Activated CD4-positive, alpha-beta memory T cell treated with anti-CD3 and anti-CD28 coated beads for 36 hours (primary cell): ENCODE measurements at regions of chr9 and their contacts with region 1.

Region 1: DNA sequence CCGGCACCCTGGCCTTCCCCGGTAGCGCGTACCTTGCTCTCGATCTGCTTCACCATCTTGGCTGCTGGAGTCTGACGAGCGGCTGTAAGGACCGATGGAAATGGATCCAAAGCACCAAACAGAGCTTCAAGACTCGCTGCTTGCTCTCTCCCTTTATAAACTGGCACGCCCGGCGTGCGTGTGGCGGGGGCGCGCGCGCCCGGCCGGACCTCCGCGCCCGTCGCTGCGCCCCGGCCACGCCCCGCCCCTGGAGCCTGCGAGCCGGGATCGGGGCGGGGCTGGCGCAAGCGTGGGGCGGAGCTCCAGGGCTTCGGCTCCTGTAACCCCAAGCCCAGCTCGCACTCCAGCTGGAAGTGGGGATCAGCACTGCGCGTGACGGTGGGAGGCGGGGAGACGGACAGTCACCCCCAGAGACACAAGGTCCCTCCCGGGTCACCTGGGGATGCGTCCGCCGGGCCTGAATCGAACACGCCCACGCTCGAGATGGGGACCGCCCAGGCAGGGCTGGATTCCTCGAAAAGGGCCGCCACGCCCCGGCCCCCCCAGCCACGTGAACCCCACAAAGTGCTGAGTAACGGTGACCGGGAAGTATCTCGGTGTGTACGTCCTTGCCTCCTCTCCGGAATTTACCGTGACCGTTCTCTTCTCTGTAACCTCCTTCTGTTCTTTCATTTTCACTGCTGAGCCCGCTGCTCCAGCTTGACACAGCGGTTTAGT is at the start of gene TXN:
- DNase-seq: peak; percentile 95
- H3K4me3 Mint-ChIP-seq: peak within 1 kb of the TSS; percentile 90
- H3K27ac Mint-ChIP-seq: peak within 1 kb of the TSS; percentile 97
- H3K4me1 Mint-ChIP-seq: peaks cover 57% of the 10 kb centered on the region
- H3K27me3 Mint-ChIP-seq: no peaks in the 10 kb centered on the region
- total RNA-seq, gene TXN: 554 to 573 TPM

Region 2: DNA sequence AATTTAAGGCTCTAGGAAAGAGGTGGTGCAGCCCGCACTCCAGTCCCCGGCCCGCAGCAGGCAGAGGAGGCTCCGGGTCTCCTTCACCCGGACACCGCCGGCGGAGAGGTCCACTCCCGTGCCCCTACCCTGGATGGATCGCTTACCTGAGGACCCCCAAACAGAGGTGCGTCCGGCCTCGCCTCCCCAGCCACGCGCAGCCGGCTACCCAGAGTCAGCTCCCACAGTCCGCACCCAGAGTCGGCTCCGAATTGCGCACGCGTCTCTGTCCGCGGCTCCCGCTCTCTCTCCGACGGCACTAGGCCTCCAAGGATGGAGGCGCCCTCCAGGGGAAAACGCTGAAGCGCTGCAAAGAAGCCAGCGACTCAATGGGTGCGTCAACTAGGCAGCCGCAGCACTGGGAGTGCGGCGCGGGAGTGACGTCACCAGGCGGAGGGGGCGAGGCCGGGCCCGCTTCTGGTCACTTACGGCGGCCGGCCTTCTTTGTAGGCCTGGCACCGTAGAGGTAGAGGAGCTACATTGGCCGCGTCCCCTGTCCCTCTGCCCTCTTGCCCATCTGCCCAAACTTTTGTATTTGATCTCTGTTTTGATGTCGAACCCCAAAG is 1322.7 kb before region 1 on chr9 and contains the start of gene ELP1:
- CTCF ChIA-PET with region 1: no interaction called
- POLR2A ChIA-PET with region 1: no interaction called
- intact Hi-C with region 1: loop called (anchors 10 kb)
- DNase-seq: peak; percentile 95
- H3K4me3 Mint-ChIP-seq: peak within 1 kb of the TSS; percentile 95
- H3K27ac Mint-ChIP-seq: peak within 1 kb of the TSS; percentile 92
- H3K4me1 Mint-ChIP-seq: peaks cover 25% of the 10 kb centered on the region
- H3K27me3 Mint-ChIP-seq: no peaks in the 10 kb centered on the region
- total RNA-seq, gene ELP1: 25.5 to 29.2 TPM

Region 3: GRCh38 chr9:109887079-109887478 is 369.5 kb before region 1 on chr9:
- CTCF ChIA-PET with region 1: no interaction called
- POLR2A ChIA-PET with region 1: interaction called, 3 read pairs
- intact Hi-C with region 1: loop called (anchors 2 kb)
- DNase-seq: no peak
- H3K4me3 Mint-ChIP-seq: no peak overlapping the region
- H3K27ac Mint-ChIP-seq: peak overlapping the region; percentile 84
- H3K4me1 Mint-ChIP-seq: peaks cover 50% of the 10 kb centered on the region
- H3K27me3 Mint-ChIP-seq: peaks cover 1% of the 10 kb centered on the region

Region 4: DNA sequence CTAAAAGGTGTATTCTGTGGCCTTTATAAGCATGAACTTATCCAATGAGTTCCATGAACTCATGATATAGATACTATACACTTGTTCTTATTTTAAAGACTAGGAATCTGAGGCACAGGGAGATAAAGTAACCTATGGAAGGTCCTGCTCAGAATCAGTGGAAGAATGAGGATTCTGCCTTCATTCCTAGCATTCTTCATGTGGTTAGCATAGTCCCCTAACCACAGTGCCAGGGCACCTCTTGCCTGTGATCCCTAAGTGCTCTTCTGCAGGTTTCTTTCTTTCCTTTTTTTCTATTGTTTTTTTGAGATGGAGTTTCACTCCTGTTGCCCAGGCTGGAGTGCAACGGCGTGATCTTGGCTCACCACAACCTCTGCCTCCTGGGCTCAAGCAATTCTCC is 222.7 kb before region 1 on chr9:
- CTCF ChIA-PET with region 1: no interaction called
- POLR2A ChIA-PET with region 1: no interaction called
- intact Hi-C with region 1: no loop called
- DNase-seq: no peak
- H3K4me3 Mint-ChIP-seq: no peak overlapping the region
- H3K27ac Mint-ChIP-seq: no peak overlapping the region
- H3K4me1 Mint-ChIP-seq: peaks cover 17% of the 10 kb centered on the region
- H3K27me3 Mint-ChIP-seq: no peaks in the 10 kb centered on the region

Region 5: DNA sequence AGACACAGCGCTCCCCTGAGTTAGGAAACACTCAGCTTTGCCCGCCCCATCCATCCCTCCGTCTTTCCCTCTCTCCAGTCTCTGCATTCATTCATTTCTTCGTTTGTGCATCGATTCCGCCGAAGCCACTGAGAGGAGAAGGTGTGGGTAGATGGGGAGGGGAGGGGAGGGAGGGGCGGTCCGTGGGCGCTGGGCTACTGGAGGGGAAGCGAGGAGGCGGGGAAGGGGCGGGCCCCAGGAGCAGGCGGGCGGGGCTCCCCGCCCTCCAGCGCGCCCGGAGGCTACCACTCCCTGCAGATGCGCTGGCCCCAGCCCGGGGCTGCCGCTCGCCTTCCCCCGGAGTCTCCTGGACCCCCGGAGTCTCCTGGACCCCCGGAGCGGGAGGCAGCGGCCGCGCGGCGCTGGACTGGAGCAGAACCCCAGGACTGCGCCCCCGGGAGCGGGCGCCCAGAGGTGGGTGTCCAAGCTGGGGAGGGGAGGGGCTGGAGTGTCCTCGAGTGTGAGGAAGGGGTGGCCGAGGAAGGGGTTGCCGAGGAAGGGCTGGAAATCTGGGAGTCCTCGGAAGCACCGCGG is 208.0 kb before region 1 on chr9:
- CTCF ChIA-PET with region 1: no interaction called
- POLR2A ChIA-PET with region 1: interaction called, 3 read pairs
- intact Hi-C with region 1: loop called (anchors 2 kb)
- DNase-seq: peak; percentile 89
- H3K4me3 Mint-ChIP-seq: peak overlapping the region; percentile 90
- H3K27ac Mint-ChIP-seq: peak overlapping the region; percentile 72
- H3K4me1 Mint-ChIP-seq: peaks cover 39% of the 10 kb centered on the region
- H3K27me3 Mint-ChIP-seq: peaks cover 13% of the 10 kb centered on the region

Region 6: GRCh38 chr9:110266795-110267194 is 10.3 kb after region 1 on chr9:
- CTCF ChIA-PET with region 1: interaction called, 3 read pairs
- POLR2A ChIA-PET with region 1: no interaction called
- intact Hi-C with region 1: loop called (anchors 1 kb)
- DNase-seq: no peak
- H3K4me3 Mint-ChIP-seq: no peak overlapping the region
- H3K27ac Mint-ChIP-seq: no peak overlapping the region
- H3K4me1 Mint-ChIP-seq: no peaks in the 10 kb centered on the region
- H3K27me3 Mint-ChIP-seq: no peaks in the 10 kb centered on the region

Region 7: DNA sequence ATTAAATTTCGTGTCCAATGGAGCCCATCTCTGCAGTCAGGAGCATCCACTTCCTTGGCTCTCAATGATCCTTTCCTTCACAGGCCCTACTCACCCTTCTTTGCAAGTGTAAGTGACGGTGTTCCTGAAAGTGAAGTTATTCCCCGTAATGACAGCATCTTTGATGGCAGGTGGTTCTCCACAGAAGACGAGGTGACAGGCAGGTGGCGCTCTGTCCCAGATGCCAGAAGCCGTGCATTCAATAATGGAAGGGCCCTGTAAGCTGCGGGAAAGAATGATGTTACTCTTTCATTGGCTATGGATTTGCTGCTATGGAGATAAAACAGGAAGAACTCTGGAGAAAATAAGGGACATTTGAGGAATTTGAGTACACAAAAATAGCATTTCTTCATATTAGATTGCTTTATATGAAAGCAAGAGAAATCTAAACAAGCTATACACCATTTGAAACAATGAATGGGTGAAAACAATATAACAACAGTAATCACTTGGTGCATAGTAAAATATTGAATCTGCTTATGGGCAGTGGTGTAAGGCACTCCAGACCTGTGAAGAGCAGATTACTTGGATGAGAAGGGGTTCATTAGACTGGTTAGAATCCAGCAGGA is 171.1 kb after region 1 on chr9:
- CTCF ChIA-PET with region 1: no interaction called
- POLR2A ChIA-PET with region 1: no interaction called
- intact Hi-C with region 1: loop called (anchors 5 kb)
- DNase-seq: peak; percentile 46
- H3K4me3 Mint-ChIP-seq: no peak overlapping the region
- H3K27ac Mint-ChIP-seq: no peak overlapping the region
- H3K4me1 Mint-ChIP-seq: no peaks in the 10 kb centered on the region
- H3K27me3 Mint-ChIP-seq: no peaks in the 10 kb centered on the region

Region 8: GRCh38 chr9:111483862-111484571 is 1227.5 kb after region 1 on chr9 and contains the start of gene ECPAS:
- CTCF ChIA-PET with region 1: no interaction called
- POLR2A ChIA-PET with region 1: no interaction called
- intact Hi-C with region 1: loop called (anchors 5 kb)
- DNase-seq: peak; percentile 80
- H3K4me3 Mint-ChIP-seq: peak within 1 kb of the TSS; percentile 85
- H3K27ac Mint-ChIP-seq: peak within 1 kb of the TSS; percentile 87
- H3K4me1 Mint-ChIP-seq: peaks cover 30% of the 10 kb centered on the region
- H3K27me3 Mint-ChIP-seq: no peaks in the 10 kb centered on the region
- total RNA-seq, gene ECPAS: 66.5 to 67.0 TPM